Activated CD8-positive, alpha-beta T cell treated with anti-CD3 and anti-CD28 coated beads for 36 hours (primary cell): ENCODE measurements at regions of chr2 and their contacts with region 1.

Region 1: GRCh38 chr2:101252408-101253012 is at the start of gene CNOT11:
- DNase-seq: peak; percentile 99
- ATAC-seq: peak; percentile 89
- H3K4me3 Mint-ChIP-seq: peak within 1 kb of the TSS; percentile 88
- H3K27ac Mint-ChIP-seq: peak within 1 kb of the TSS; percentile 91
- H3K4me1 Mint-ChIP-seq: peaks cover 40% of the 10 kb centered on the region
- H3K27me3 Mint-ChIP-seq: no peaks in the 10 kb centered on the region
- CTCF ChIP-seq: no peak
- total RNA-seq, gene CNOT11: 56.7 to 59.7 TPM

Region 2: DNA sequence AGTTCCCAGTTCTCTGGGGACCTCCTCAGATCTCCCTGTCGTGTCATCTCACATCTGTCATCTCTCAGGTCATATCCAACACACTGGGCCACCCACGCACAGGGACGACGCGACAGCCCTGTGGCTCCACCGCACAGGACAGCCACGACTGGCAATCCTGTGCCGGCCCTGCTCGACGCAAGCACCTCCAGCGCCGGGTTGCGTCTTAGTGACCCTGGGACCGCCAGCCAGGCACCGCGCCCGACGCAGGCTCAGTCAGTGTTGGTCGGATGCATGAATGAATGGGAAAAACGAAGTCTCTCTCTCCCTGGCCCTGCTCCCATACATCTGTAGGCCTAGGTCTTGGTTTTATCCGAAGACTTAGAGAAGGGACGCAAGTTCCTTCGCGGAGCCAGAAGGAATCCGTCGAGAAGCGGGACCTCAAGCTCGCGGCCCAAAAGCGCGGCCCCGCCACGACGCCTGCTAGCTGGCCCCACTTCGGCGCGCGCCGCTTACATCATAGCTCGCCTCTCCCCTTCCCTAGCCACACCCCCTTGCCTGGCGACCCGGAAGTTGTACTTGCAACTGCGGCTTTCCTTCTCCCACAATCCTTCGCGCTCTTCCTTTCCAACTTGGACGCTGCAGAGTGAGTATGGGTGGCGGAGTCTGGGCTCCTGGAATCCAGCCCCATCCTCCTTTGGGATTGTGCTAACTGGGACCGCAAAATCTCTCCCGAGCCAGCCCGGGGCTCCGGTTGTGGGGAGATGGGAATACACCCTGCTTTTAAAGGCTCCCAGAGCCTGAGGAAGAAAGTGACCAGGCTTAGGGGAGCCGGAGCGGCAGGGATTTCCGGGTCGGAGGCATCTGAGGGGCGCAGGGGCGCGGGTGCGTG is 250.6 kb before region 1 on chr2 and contains the start of gene RPL31:
- CTCF ChIA-PET with region 1: interaction called, 3 read pairs
- POLR2A ChIA-PET with region 1: interaction called, 17 read pairs
- intact Hi-C with region 1: no loop called
- DNase-seq: peak; percentile 98
- ATAC-seq: peak; percentile 94
- H3K4me3 Mint-ChIP-seq: peak within 1 kb of the TSS; percentile 97
- H3K27ac Mint-ChIP-seq: peak within 1 kb of the TSS; percentile 98
- H3K4me1 Mint-ChIP-seq: peaks cover 45% of the 10 kb centered on the region
- H3K27me3 Mint-ChIP-seq: no peaks in the 10 kb centered on the region
- CTCF ChIP-seq: no peak
- total RNA-seq, gene RPL31: 1,667 to 1,859 TPM

Region 3: GRCh38 chr2:101238930-101239759 is 13.4 kb before region 1 on chr2:
- CTCF ChIA-PET with region 1: interaction called, 23 read pairs
- POLR2A ChIA-PET with region 1: interaction called, 4 read pairs
- intact Hi-C with region 1: no loop called
- DNase-seq: no peak
- ATAC-seq: no peak
- H3K4me3 Mint-ChIP-seq: no peak overlapping the region
- H3K27ac Mint-ChIP-seq: no peak overlapping the region
- H3K4me1 Mint-ChIP-seq: peaks cover 3% of the 10 kb centered on the region
- H3K27me3 Mint-ChIP-seq: no peaks in the 10 kb centered on the region
- CTCF ChIP-seq: no peak

Region 4: GRCh38 chr2:101272045-101272784 is 19.7 kb after region 1 on chr2:
- CTCF ChIA-PET with region 1: interaction called, 10 read pairs
- POLR2A ChIA-PET with region 1: interaction called, 25 read pairs
- intact Hi-C with region 1: no loop called
- DNase-seq: no peak
- ATAC-seq: peak; percentile 88
- H3K4me3 Mint-ChIP-seq: no peak overlapping the region
- H3K27ac Mint-ChIP-seq: peak overlapping the region; percentile 84
- H3K4me1 Mint-ChIP-seq: peaks cover 44% of the 10 kb centered on the region
- H3K27me3 Mint-ChIP-seq: no peaks in the 10 kb centered on the region
- CTCF ChIP-seq: no peak

Region 5: DNA sequence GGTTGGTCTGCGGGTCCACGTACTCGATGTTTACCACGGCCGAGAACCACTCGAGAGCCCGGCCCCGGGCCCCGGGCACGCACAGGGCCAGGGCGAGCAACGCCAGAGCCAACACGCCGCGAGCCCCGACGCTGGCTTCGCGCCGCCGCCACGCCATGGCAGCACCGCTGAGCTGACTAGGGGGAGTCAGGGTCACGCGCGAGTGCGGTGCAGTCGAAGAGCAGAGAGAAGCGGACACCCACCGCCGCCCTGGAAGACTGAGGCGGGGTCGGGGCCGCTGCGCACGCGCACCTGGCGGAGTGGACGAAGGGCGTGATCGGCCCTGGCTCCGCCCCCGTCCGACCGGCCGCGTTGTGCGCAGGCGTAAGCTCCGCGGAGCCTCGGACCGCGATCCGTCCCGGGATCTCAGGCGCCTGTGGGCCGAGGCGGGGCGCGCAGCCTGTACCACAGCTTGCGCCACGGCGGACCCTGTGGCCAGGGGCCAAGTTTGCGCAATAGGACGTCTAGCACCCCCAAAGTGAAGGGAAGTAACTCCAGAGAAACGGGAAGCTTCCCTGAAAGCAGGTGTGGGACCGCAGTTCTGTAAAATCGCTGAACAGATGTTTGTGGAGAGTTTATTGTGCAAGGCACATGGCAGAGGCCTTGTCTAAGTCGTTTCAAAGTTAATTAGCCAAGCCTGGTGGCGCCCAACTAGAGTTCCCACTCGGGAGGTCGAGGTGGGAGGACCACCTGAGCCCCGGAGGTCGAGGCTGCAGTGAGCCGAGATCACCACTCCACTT is 56.1 kb after region 1 on chr2 and contains the start of gene RNF149:
- CTCF ChIA-PET with region 1: interaction called, 6 read pairs
- POLR2A ChIA-PET with region 1: interaction called, 15 read pairs
- intact Hi-C with region 1: loop called (anchors 5 kb)
- DNase-seq: peak; percentile 91
- ATAC-seq: peak; percentile 77
- H3K4me3 Mint-ChIP-seq: peak within 1 kb of the TSS; percentile 95
- H3K27ac Mint-ChIP-seq: peak within 1 kb of the TSS; percentile 98
- H3K4me1 Mint-ChIP-seq: peaks cover 58% of the 10 kb centered on the region
- H3K27me3 Mint-ChIP-seq: no peaks in the 10 kb centered on the region
- CTCF ChIP-seq: no peak
- total RNA-seq, gene RNF149: 48.7 to 53.2 TPM

Region 6: DNA sequence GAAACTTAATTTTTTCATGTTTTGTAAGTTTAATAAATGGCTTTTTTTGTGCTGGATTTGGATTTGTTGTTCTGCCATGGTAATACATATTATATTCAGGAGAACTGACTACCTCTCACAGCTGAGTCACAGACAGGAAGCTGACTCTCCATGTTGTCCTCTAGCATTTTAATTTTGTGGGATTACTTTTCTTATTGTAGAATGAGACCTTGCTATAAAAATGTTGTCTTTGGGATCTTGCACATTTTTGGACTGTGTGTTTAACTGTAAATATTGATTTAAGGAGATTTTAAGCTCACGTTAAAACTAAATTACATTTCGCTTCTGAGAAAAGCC is 493.8 kb after region 1 on chr2:
- CTCF ChIA-PET with region 1: no interaction called
- POLR2A ChIA-PET with region 1: no interaction called
- intact Hi-C with region 1: no loop called
- DNase-seq: no peak
- ATAC-seq: peak; percentile 28
- H3K4me3 Mint-ChIP-seq: no peak overlapping the region
- H3K27ac Mint-ChIP-seq: no peak overlapping the region
- H3K4me1 Mint-ChIP-seq: peaks cover 68% of the 10 kb centered on the region
- H3K27me3 Mint-ChIP-seq: no peaks in the 10 kb centered on the region
- CTCF ChIP-seq: no peak